Sciatic nerve (tissue), 2 donors: ENCODE measurements at regions of chr2 and their contacts with region 1.

Region 1: GRCh38 chr2:21543630-21544029 is 419.9 kb downstream of the TDRD15 start:
- DNase-seq: no peak
- ATAC-seq: no peak

Region 2: DNA sequence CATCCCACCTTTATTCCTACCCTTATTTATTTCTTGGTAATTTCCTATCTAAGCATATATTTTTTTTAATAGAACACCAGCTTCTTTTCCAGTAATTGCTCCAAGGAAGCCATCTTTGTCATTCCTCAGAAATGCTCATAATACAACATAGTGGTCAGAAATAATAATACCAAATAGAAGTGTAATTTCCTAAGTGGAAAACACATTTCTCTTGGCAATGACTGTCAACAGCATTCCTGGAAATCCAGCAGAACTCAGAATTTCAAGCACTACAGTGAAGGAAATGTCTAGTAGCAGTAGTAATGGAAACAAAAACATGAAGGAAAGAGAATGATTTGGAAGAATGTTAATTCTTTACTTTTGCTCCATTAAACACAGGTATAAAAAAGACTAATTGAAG is 820.1 kb before region 1 on chr2:
- intact Hi-C with region 1: no loop called
- DNase-seq: no peak
- ATAC-seq: no peak

Region 3: GRCh38 chr2:21415237-21415636 is 128.4 kb before region 1 on chr2:
- intact Hi-C with region 1: loop called (anchors 10 kb)
- DNase-seq: no peak
- ATAC-seq: no peak

Region 4: DNA sequence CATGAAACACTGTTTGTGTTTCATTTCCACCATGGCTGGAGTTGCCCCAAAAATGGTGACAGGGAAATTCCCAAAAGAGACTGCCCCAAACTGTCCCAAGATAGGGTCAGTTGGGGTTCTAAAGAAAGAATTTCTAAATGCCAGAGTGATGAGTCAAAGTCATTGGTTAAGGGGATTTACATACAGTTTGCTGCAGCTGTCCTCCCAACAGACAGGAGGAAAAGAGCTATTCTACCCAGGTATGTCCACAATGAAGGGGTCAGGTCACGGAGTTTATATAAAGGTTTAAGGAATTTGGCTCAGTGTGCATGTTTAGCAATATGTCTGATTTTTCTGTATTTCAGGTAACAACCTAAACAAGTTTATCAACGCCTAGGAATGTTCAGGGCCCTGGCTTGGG is 75.7 kb before region 1 on chr2:
- intact Hi-C with region 1: no loop called
- DNase-seq: no peak
- ATAC-seq: no peak

Region 5: DNA sequence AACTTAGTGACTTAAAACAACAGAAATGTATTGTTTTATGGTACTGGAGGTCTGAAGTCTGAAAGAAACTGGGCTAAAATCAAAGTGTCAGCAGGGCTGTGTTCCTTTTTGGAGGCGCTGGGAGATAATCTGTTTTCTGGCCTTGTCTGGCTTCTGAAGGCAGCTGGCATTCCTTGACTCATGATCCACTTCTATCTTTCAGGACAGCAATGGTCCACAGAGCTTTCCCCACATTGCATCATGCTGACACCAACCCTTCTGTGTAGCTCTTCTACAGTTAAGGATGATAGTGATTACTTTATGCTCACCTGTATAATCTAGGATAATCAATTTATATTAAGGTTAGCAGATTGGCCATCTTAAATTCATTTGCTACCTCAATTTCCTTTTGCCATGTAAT is 27.7 kb before region 1 on chr2:
- intact Hi-C with region 1: no loop called
- DNase-seq: no peak
- ATAC-seq: no peak

Region 6: DNA sequence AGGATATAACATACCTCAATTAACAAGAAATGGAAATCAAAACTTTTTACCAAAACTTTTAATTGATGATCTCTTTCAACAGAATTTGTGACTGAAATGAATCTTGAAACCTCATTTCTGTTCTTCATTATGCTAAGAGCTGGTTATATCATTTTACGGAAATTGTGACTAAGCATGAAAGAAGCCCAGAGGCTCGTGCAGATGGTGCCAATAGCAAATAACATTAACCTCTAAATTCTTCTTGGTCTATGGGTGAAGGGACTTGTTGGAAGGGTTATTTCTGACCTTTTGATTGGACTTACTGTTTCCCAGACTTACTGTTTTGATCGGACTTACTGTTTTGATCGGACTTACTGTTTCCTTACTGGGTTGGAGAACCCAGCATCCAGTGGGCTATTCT is 15.7 kb after region 1 on chr2:
- intact Hi-C with region 1: no loop called
- DNase-seq: no peak
- ATAC-seq: no peak